ENCODE measurements at regions of chr14 and their contacts with region 1.

Region 1: DNA sequence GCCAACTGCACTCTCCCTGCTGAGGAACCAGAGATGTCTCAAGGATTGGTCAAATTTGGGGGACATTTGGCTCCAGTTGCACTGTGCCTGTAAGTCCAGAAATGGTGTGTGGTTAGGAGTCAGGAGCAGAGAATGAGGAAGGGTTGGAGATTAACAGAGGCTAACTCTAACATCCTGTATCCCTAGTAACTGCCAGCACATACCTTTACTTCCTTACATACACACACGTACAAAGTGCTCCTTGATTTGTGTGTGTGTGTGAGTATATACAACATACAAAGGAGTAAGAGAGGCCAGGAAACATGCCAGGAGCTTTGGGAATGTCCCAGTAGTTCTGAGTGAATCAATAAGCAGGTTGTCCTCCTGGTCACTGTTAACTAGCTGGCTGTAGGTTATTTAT is 39.8 kb upstream of the NRXN3 start:
- DNase-seq: no peak

Region 2: DNA sequence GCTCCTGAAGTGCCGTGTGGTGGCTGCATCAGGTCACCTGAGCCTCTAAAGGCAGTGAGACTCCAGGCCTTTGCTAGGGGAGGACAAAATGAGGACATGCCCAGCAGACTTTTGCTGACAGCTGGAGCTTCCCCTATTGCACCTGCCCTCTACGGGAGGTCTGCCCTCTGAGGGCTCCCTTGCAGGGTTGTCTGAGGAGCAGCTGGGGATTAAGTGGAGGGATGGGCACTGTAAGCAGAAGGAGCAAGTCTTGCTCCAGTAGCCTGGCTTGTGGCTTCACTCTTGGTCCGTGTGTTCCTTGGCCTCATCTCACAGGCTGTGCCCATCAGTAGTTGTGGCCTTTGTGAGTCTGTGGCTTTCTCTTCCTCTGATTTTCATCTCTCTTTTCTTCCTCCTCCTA is 27.1 kb before region 1 on chr14:
- intact Hi-C with region 1: loop called in 1 of 2 experiments (anchors 1 kb)
- DNase-seq: no peak

Region 3: DNA sequence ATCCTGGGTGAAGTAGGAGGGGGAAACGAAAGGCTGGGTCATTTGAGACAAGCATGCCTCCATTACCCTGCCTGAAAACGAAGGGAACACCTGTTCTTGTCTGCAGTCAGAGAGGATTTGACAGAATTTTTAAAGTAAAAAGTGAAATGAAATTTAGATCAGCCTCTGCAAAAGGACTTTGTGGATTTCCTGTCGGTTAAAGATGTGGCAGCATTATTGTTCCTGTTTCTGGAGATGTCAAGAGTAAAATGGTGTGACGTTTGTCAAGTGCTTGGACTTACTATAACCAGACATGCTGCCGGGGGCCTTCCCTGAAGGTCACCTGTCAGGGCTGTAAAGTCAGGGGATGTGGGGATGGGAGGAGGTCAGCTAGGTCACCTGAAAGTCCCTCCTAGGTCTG is 71.8 kb after region 1 on chr14:
- intact Hi-C with region 1: no loop called
- DNase-seq: no peak

Measured in posterior vena cava (tissue), 2 donors.